Aorta (tissue), 5 donors: ENCODE measurements at regions of chr21 and their contacts with region 1.

Region 1: DNA sequence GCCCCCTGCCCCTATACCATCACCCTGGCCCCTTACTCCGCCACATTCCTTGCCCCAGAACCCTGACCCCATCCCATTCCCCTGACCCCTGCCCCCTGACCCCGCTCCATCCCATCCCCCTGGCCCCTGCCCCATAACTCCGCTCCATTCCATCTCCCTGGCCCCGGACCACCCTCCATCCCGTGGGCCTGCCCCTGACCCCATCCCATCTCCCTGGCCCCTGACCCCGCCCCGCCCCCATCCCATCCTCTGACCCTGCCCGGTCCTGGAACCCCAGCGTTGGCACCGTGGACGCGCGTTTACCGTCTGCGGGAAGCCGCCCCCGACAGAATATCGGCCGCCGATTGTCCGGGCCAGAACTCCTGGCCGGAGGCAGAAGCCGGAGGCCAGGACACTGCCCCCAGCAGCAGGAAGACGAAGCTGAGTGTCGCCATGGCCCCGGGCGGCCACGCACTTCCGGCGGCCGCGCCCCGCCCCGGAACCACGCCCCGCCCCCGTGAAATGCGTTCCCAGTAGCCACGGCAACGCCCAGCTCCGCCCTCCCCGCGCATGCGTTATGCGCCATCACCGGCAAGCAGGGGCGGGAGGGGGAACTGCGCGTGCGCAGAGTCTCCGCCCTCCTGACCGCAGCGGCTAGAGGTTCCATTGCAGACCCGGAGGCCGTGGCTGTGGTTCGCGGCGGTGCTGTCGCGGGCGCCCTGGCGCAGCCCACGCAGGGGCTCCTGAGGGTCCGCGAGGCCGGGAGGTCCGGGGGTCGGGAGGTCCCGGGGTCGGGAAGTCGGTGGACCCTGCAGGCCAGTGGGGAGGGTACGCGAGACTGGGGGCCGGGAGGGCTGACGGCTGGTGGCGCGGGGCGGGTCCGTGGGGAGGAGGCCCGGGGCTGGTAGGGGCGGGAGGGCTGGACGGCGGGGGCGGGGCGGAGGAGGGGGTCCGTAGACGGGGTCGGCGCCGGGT is at the start of gene POFUT2:
- DNase-seq: peak; percentile 98 to 99
- ATAC-seq: peak; percentile 93
- H3K4me3 ChIP-seq: peak within 1 kb of the TSS; percentile 48 to 87
- H3K27ac ChIP-seq: no peak within 1 kb of the TSS
- H3K4me1 ChIP-seq: no peaks in the 10 kb centered on the region
- H3K27me3 ChIP-seq: no peaks in the 10 kb centered on the region
- total RNA-seq, gene POFUT2: 35.8 to 52.2 TPM

Region 2: DNA sequence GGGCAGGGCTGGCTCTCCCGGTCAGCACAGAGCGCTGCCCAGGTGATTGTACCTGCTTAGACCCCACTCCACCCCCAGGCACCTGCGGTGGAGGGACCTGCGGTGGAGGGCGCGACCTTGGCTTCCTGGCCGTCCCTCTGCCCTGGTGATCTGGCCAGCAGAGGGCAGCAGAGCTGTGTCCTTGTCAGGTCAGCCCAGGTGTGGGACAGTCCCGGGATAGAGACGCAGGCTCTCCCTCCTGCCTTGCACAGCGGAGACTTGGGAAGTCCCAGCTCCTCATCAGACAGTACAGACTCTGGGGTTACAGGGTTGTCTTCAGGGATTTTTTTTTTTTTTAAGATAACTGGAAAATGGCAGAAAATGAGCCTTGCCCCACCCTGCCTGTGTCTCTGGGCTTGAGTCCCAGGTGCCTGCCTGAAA is 337.9 kb before region 1 on chr21:
- intact Hi-C with region 1: loop called in 1 of 2 experiments (anchors 10 kb)
- DNase-seq: peak; percentile 90 to 96
- ATAC-seq: peak; percentile 78
- H3K4me3 ChIP-seq: no peak overlapping the region
- H3K27ac ChIP-seq: no peak overlapping the region
- H3K4me1 ChIP-seq: no peaks in the 10 kb centered on the region
- H3K27me3 ChIP-seq: no peaks in the 10 kb centered on the region

Region 3: GRCh38 chr21:45140346-45140940 is 147.3 kb before region 1 on chr21:
- intact Hi-C with region 1: loop called in 1 of 2 experiments (anchors 10 kb)
- DNase-seq: peak; percentile 88
- ATAC-seq: peak; percentile 83
- H3K4me3 ChIP-seq: no peak overlapping the region
- H3K27ac ChIP-seq: no peak overlapping the region
- H3K4me1 ChIP-seq: peaks cover 0 to 2% of the 10 kb centered on the region in 2 donors
- H3K27me3 ChIP-seq: no peaks in the 10 kb centered on the region

Region 4: GRCh38 chr21:45187646-45188045 is 100.1 kb before region 1 on chr21:
- intact Hi-C with region 1: no loop called
- DNase-seq: no peak
- ATAC-seq: no peak
- H3K4me3 ChIP-seq: no peak overlapping the region
- H3K27ac ChIP-seq: no peak overlapping the region
- H3K4me1 ChIP-seq: no peaks in the 10 kb centered on the region
- H3K27me3 ChIP-seq: no peaks in the 10 kb centered on the region

Region 5: GRCh38 chr21:45248893-45249381 is 38.8 kb before region 1 on chr21:
- intact Hi-C with region 1: no loop called
- DNase-seq: peak; percentile 72 to 83
- ATAC-seq: peak; percentile 65
- H3K4me3 ChIP-seq: no peak overlapping the region
- H3K27ac ChIP-seq: no peak overlapping the region
- H3K4me1 ChIP-seq: no peaks in the 10 kb centered on the region
- H3K27me3 ChIP-seq: no peaks in the 10 kb centered on the region

Region 6: GRCh38 chr21:45366931-45367401 is 79.3 kb after region 1 on chr21:
- intact Hi-C with region 1: no loop called
- DNase-seq: peak; percentile 92 to 93
- ATAC-seq: peak; percentile 24
- H3K4me3 ChIP-seq: no peak overlapping the region
- H3K27ac ChIP-seq: peak overlapping the region in 1 of 2 donors; percentile 68
- H3K4me1 ChIP-seq: no peaks in the 10 kb centered on the region
- H3K27me3 ChIP-seq: no peaks in the 10 kb centered on the region

Region 7: DNA sequence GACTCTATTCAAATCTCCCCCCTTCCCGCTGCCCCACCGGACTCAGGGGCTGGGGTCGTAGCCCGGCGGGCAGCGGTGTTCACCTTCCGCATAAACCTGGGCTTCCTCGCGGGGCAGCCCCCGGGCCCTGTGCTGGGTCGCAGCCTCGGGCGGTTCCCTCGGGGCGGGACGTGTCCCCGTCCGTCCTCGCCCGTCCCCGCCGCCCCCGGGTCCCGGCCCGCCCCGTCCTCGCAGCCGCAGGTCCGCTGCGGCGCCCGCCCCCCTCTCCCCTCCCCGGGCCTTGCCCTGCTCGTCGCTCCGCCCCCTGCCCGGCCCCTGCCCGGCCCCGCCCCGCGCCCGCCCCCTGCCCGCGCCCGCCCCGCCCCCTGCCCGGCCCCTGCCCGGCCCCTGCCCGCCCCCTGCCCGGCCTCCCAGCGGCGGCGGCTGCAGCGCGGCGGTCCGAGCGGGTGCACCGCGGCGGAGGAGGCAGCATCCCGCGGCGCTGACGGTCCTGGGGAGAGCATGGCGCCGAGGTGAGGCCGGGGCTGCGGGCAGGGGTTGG is 117.1 kb after region 1 on chr21 and contains the start of gene COL18A1:
- intact Hi-C with region 1: loop called in 1 of 2 experiments (anchors 10 kb)
- DNase-seq: peak; percentile 80 to 89
- ATAC-seq: peak; percentile 61
- H3K4me3 ChIP-seq: peak within 1 kb of the TSS; percentile 94
- H3K27ac ChIP-seq: peak within 1 kb of the TSS; percentile 77 to 83
- H3K4me1 ChIP-seq: no peaks in the 10 kb centered on the region
- H3K27me3 ChIP-seq: no peaks in the 10 kb centered on the region
- total RNA-seq, gene COL18A1: 289 to 301 TPM

Region 8: GRCh38 chr21:45439161-45439872 is 151.6 kb after region 1 on chr21:
- intact Hi-C with region 1: loop called (anchors 1 kb)
- DNase-seq: peak; percentile 90 to 96
- ATAC-seq: peak; percentile 95
- H3K4me3 ChIP-seq: no peak overlapping the region
- H3K27ac ChIP-seq: peak overlapping the region; percentile 32 to 72
- H3K4me1 ChIP-seq: no peaks in the 10 kb centered on the region
- H3K27me3 ChIP-seq: no peaks in the 10 kb centered on the region

Region 9: DNA sequence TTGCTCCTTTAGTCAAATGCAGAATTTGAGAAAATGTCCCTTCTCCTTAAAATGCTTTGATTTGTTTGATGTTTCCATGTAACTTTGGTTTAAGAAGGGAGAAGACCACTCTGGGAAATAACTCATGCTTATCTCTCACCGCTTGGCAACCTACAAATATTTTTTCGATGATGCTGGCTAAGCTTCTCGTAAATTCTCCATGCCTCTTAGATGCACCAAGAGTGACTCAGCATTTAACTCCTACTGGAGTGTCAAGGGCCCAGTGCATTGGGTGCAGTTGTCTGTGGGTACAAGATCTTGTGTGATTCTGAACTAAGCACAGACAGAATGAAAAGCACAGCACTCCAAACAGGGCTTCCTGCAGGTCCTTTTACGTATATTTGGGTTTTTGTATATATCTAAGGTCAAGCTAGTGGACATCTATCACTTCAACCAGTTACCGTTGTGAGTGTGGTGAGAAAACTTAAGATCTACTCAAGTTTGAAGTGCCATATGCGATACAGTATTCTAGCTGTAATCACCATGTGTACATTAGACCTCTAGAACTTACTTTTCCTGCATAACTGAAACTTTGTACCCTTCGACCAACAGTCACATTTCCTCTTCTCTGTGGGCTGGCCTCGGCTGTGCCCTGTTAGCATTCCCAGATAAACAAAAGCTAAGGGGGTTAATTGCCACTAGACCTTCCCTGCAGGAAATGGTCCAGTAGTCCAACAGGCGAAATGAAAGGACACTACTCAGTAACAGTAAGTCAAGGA is 173.1 kb after region 1 on chr21:
- intact Hi-C with region 1: no loop called
- DNase-seq: peak in 1 of 2 donors; percentile 30
- ATAC-seq: no peak
- H3K4me3 ChIP-seq: no peak overlapping the region
- H3K27ac ChIP-seq: peak overlapping the region in 1 of 2 donors; percentile 53
- H3K4me1 ChIP-seq: peaks cover 0 to 2% of the 10 kb centered on the region in 2 donors
- H3K27me3 ChIP-seq: no peaks in the 10 kb centered on the region

Region 10: DNA sequence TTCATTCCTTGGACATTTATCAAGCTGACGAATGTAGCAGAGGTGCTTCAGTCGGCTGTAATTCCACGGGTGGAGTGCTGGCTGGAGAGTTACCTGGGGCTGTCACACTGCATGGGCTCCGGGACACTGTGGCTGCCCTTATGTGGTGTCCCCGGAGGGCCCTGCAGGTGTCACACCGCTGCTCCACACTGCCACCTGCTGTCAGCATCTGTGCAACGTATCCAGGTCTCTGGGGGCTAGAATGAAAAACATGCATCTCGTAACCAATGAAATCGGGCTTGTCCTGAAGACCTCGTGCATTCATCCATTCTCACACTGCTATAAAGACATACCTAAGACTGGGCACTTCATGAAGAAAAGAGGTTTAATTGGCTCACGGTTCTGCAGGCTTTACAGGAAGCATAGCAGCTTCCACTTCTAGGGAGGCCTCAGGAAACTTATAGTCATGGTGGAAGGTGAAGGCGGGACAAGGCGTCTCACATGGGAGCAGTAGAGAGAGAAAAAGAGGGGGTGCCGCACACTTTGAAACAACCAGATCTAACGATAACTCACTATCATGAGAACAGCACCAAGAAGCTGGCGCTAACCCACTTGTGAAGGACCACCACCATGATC is 309.1 kb after region 1 on chr21:
- intact Hi-C with region 1: loop called in 1 of 2 experiments (anchors 5 kb)
- DNase-seq: peak; percentile 79 to 87
- ATAC-seq: peak; percentile 75
- H3K4me3 ChIP-seq: no peak overlapping the region
- H3K27ac ChIP-seq: no peak overlapping the region
- H3K4me1 ChIP-seq: no peaks in the 10 kb centered on the region
- H3K27me3 ChIP-seq: no peaks in the 10 kb centered on the region